ENCODE measurements at regions of chr12 and their contacts with region 1.

Region 1: DNA sequence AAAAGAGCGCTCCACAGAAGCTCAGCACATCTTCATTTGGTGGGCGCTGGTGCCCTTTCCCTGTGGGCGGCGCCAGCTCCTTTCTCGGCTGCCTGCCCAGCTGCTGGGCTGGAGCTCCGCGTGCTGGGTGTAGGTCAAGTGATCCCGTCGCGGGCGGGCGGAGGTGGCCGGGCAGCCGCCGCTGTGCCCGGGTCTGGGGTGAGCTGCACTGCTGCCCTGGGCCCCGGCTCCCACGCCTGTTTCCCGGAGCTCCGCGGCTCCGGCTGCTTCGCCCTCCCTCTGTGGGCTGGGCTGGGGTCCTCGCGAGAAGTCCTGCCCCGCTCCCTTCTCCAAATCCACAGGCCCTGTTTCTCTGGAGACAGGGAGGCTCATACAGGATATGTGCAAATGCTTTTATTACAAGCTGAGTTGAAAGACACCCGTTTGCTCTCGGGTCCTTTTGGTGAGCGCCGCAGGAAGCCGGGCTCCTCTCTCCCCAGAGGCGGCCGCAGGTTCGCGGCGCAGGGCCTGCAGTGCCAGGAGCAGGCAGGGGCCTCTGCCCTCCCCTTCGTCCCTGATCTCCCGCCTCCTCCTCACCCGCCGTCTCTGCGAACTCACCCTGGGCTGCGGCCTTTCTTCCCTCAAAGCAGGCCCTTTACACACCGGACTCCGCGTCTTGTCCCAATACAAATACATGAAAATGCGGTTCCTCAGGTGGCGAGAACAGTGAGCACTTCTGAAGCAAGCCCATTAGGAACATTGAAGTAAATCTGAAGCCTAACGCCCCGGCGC is 67.8 kb upstream of the CAPRIN2 start:
- DNase-seq: peak; percentile 10
- ATAC-seq: peak; percentile 83
- H3K4me3 ChIP-seq: peak overlapping the region; percentile 27
- H3K27ac ChIP-seq: no peak overlapping the region
- H3K4me1 ChIP-seq: peaks cover 3% of the 10 kb centered on the region; the same call in 1 of the 2 replicates
- H3K27me3 ChIP-seq: peaks cover 21% of the 10 kb centered on the region
- CTCF ChIP-seq: no peak
- POLR2A ChIP-seq: no peak
- RAD21 ChIP-seq: no peak

Region 2: GRCh38 chr12:28998637-28999120 is 1823.9 kb before region 1 on chr12:
- CTCF ChIA-PET with region 1: no interaction called
- POLR2A ChIA-PET with region 1: interaction called, 17 read pairs
- dilution Hi-C with region 1: no loop called
- in situ Hi-C with region 1: no loop called
- intact Hi-C with region 1: no loop called
- DNase-seq: peak; percentile 56
- ATAC-seq: peak; percentile 88
- H3K4me3 ChIP-seq: no peak overlapping the region
- H3K27ac ChIP-seq: no peak overlapping the region
- H3K4me1 ChIP-seq: no peaks in the 10 kb centered on the region
- H3K27me3 ChIP-seq: no peaks in the 10 kb centered on the region
- CTCF ChIP-seq: peak; percentile 61
- POLR2A ChIP-seq: no peak
- RAD21 ChIP-seq: peak; percentile 64

Region 3: GRCh38 chr12:30908722-30909348 is 86.3 kb after region 1 on chr12:
- CTCF ChIA-PET with region 1: no interaction called
- POLR2A ChIA-PET with region 1: no interaction called
- dilution Hi-C with region 1: no loop called
- in situ Hi-C with region 1: no loop called
- intact Hi-C with region 1: no loop called
- DNase-seq: peak; percentile 45
- ATAC-seq: peak; percentile 77
- H3K4me3 ChIP-seq: no peak overlapping the region
- H3K27ac ChIP-seq: no peak overlapping the region
- H3K4me1 ChIP-seq: peaks cover 4% of the 10 kb centered on the region; the same call in 1 of the 2 replicates
- H3K27me3 ChIP-seq: peaks cover 5% of the 10 kb centered on the region; the same call in 1 of the 2 replicates
- CTCF ChIP-seq: no peak
- POLR2A ChIP-seq: no peak
- RAD21 ChIP-seq: no peak

Region 4: GRCh38 chr12:31005944-31006361 is 183.4 kb after region 1 on chr12:
- CTCF ChIA-PET with region 1: no interaction called
- POLR2A ChIA-PET with region 1: interaction called, 26 read pairs
- dilution Hi-C with region 1: no loop called
- in situ Hi-C with region 1: no loop called
- intact Hi-C with region 1: no loop called
- DNase-seq: peak; percentile 20
- ATAC-seq: peak; percentile 61
- H3K4me3 ChIP-seq: no peak overlapping the region
- H3K27ac ChIP-seq: no peak overlapping the region
- H3K4me1 ChIP-seq: peaks cover 9% of the 10 kb centered on the region
- H3K27me3 ChIP-seq: peaks cover 5% of the 10 kb centered on the region; the same call in 1 of the 2 replicates
- CTCF ChIP-seq: no peak
- POLR2A ChIP-seq: no peak
- RAD21 ChIP-seq: no peak

Measured in IMR-90 (cell line).